Activated naive CD4-positive, alpha-beta T cell treated with anti-CD3 and anti-CD28 coated beads, Interleukin-2, amount 10 ng/mL, durations not matched to agents 7 days and 5 days (primary cell): ENCODE measurements at regions of chr4 and their contacts with region 1.

Region 1: DNA sequence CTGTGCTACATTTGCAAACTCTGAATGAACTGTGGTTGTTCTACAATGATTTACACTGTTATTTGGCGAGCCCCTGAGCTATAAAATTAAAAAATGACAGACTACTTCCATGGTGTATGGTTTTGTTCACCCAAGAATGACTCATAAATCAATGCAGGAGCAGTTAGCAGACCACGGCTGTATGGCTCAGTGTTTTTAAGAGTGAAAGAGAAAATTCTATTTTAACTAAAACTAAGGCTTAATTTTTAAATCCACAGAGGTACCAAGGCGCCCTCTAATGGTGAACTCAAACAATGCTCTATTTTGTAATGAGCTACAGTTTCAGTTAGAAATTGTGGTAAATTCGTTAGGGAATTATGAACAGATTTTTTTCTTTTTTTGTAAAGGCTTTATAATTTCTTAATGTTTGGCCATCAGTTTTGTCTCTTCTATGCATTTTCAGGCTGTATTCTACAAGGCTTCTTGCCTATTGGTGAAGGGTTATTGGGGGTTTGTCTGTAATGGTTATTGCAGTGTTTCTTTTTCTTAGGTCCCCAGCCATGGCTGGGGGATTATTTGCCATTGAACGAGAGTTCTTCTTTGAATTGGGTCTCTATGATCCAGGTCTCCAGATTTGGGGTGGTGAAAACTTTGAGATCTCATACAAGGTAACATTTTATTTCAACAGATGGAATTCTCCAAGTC is 32.5 kb downstream of the HMGB2 start:
- DNase-seq: peak; percentile 36
- H3K4me3 Mint-ChIP-seq: no peak overlapping the region
- H3K27ac Mint-ChIP-seq: no peak overlapping the region
- H3K4me1 Mint-ChIP-seq: no peaks in the 10 kb centered on the region
- H3K27me3 Mint-ChIP-seq: no peaks in the 10 kb centered on the region

Region 2: GRCh38 chr4:172619218-172619617 is 682.4 kb before region 1 on chr4:
- CTCF ChIA-PET with region 1: no interaction called
- DNase-seq: no peak
- H3K4me3 Mint-ChIP-seq: no peak overlapping the region
- H3K27ac Mint-ChIP-seq: no peak overlapping the region
- H3K4me1 Mint-ChIP-seq: no peaks in the 10 kb centered on the region
- H3K27me3 Mint-ChIP-seq: no peaks in the 10 kb centered on the region

Region 3: DNA sequence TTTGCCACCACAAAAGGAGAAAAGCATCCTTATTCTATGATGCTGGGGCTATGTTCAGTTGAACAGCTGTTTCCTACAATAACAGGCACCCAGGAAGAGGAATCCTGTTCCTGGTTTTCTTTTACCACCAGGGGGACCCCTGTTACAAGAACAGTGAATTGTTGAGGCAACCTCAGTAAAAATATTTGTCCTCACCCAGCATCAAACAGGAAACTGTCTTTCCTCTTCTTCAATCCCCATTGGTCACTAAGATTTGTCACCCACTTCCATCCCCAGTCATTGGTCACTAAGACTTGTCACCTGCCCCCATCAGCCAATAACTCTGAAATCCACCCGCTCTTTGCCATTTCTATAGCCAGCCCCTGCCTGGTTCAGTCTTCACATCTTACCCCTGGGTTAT is 276.5 kb before region 1 on chr4:
- CTCF ChIA-PET with region 1: interaction called, 26 read pairs
- DNase-seq: peak; percentile 28
- H3K4me3 Mint-ChIP-seq: no peak overlapping the region
- H3K27ac Mint-ChIP-seq: no peak overlapping the region
- H3K4me1 Mint-ChIP-seq: no peaks in the 10 kb centered on the region
- H3K27me3 Mint-ChIP-seq: peaks cover 7% of the 10 kb centered on the region

Region 4: GRCh38 chr4:173257732-173258717 is 43.6 kb before region 1 on chr4:
- CTCF ChIA-PET with region 1: interaction called, 11 read pairs
- DNase-seq: peak; percentile 69
- H3K4me3 Mint-ChIP-seq: no peak overlapping the region
- H3K27ac Mint-ChIP-seq: no peak overlapping the region
- H3K4me1 Mint-ChIP-seq: no peaks in the 10 kb centered on the region
- H3K27me3 Mint-ChIP-seq: no peaks in the 10 kb centered on the region

Region 5: DNA sequence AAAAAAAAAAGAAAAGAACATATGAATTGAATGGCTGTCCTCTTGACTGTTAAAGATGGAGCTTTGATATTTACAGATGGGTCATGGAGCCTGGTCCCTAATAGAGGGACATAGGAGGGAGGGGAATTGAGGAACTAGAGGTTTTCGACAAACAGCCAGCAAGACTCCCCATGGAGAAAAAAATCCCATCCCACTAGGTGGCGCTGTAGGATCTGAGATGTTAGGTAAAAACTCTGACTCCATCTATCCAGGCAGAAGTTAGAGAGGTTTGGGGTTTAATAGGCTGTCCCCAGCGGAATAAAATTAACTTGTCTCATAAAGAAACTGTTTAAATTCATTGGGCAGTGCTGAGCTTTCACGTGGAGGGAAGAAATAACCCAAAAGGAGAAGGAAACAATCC is 13.4 kb before region 1 on chr4:
- CTCF ChIA-PET with region 1: interaction called, 41 read pairs
- DNase-seq: peak; percentile 79
- H3K4me3 Mint-ChIP-seq: no peak overlapping the region
- H3K27ac Mint-ChIP-seq: no peak overlapping the region
- H3K4me1 Mint-ChIP-seq: peaks cover 17% of the 10 kb centered on the region
- H3K27me3 Mint-ChIP-seq: no peaks in the 10 kb centered on the region

Region 6: GRCh38 chr4:173420324-173420752 is 118.7 kb after region 1 on chr4:
- CTCF ChIA-PET with region 1: interaction called, 15 read pairs
- DNase-seq: no peak
- H3K4me3 Mint-ChIP-seq: no peak overlapping the region
- H3K27ac Mint-ChIP-seq: no peak overlapping the region
- H3K4me1 Mint-ChIP-seq: peaks cover 16% of the 10 kb centered on the region
- H3K27me3 Mint-ChIP-seq: peaks cover 13% of the 10 kb centered on the region

Region 7: DNA sequence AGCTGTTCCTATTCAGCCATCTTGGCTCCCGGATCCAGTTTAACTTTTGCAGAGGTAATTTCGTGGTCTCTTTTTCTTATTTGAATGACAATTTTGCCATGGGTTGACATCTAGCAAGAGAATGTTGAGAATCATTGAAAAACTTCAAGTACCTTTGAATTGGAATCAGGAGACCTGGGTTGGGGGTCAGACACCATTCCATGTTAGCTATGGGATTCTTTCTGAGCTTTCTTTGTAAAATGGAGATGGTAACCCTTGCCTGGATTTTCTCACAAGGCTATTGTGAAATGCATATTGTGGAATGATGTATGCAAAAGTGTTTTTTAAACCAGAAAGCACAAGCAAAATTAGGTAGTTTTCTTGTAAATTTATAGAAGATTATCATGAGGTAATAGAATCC is 307.5 kb after region 1 on chr4:
- CTCF ChIA-PET with region 1: no interaction called
- DNase-seq: no peak
- H3K4me3 Mint-ChIP-seq: no peak overlapping the region
- H3K27ac Mint-ChIP-seq: no peak overlapping the region
- H3K4me1 Mint-ChIP-seq: no peaks in the 10 kb centered on the region
- H3K27me3 Mint-ChIP-seq: no peaks in the 10 kb centered on the region